ENCODE measurements at regions of chr18 and their contacts with region 1.

Region 1: DNA sequence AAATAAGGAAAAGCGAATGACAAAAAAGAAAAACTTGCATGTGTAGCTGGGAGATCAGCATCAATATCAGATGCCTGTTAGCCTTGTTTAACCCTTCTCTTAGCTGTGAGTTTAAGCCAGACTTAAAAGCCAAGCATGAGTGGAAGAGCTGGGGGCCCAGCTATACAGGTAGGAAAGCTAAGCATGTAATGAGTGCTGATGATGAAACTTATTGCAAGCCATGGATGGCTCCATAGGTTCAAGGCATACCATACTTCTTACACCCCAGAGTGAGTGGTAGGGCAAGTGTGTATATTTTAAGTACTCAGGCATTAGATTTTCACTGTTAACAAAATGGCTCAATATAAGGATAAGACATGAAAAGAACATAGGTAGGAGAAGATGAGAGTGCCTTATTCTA is 28.0 kb downstream of the RBBP8 start:
- DNase-seq: no peak
- CTCF ChIP-seq: no peak

Region 2: GRCh38 chr18:22723773-22724172 is 237.4 kb before region 1 on chr18:
- CTCF ChIA-PET with region 1: no interaction called
- POLR2A ChIA-PET with region 1: no interaction called
- DNase-seq: no peak
- CTCF ChIP-seq: no peak

Region 3: DNA sequence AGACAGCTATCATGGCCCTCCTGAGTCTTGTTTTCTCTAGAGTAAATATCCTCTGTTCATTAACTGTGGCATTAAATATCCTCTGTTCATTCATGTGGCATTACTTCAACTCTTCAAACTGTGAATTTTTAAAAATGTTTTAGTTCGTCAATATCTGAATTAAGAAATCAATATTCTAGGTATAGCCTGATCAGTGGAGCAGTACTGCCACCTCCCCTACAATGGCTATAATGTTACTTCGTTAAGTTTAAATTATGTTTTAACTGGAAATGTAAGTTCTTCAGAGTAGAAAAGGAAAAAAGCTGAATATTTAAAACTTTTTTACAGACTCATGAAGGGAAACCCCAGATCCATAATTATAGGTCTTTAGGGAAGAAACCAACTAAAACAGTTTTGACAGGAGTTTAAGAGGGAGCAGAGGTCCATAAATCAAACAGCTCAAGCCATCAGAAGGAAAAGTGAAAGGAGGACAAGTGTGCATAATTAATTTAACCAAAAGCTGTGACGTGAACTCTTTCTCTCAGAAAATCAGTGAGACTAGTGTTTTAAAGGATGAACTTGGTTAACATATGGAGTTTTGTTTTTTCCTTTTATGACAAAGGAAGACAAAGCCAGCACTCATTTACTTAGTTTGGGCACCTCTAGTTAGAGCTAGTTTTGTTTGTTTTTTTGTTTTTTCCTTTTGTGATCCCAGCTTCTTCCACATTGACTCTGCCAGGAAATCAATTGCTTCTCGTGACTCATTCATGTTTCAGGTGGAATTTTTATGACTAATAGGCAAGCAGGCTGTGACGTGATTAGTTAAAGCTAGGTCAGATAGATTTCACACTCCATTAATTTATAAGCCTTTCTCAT is 16.9 kb after region 1 on chr18:
- CTCF ChIA-PET with region 1: interaction called, 15 read pairs
- POLR2A ChIA-PET with region 1: no interaction called
- DNase-seq: no peak
- CTCF ChIP-seq: no peak